RWPE1 (cell line): ENCODE measurements at regions of chr19 and their contacts with region 1.

Region 1: GRCh38 chr19:45752639-45753038 is 16.4 kb downstream of the SIX5 start:
- DNase-seq: peak; percentile 78
- H3K27ac ChIP-seq: peak overlapping the region; percentile 93
- CTCF ChIP-seq: no peak

Region 2: DNA sequence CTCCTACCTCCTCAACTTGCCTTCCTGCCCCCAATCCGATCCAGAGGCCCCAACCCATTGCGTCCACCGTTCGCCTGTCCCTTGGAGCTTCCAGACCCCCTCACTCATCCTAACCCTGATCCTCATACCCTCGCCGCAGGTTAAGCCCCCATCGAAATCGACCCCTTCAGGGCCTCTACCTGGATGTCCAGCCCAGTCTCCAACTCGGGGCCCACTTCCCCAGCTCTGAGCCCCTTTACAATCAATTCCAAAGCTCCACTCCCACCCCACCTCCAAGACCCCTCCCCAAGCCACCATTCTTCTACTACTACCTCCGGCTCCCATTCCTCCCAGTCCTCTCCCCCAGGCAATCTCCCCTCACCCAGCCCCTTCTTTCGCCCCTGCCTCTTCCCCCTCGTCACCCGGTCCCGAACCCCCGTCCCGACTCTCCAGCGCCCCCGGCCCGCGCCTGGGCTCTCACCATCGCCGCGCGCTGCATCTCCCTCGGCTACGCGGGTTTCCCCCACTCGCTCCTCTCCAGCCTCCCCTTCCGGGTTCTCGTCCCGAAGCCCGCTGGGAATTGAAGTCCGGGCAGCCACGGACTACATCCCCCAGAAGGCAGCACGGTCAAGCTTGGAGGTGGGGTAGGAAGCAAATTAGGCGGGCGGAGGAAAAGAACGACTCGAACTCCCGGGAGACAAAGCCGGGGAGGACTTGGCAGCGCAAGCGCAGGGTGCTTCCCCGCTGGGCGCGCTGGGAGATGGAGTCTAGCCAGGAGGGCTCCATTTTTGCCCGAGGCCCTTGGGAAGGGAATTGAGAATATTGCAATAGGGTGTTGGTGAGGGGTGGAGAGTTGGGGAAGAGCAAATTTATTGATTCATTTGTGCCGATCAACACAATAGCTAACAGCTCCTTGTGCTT is 22.0 kb before region 1 on chr19 and contains the start of gene FBXO46:
- CTCF ChIA-PET with region 1: no interaction called
- POLR2A ChIA-PET with region 1: interaction called, 10 read pairs
- DNase-seq: peak; percentile 96
- H3K27ac ChIP-seq: peak within 1 kb of the TSS; percentile 86
- CTCF ChIP-seq: no peak